ENCODE measurements at regions of chr14 and their contacts with region 1.

Region 1: DNA sequence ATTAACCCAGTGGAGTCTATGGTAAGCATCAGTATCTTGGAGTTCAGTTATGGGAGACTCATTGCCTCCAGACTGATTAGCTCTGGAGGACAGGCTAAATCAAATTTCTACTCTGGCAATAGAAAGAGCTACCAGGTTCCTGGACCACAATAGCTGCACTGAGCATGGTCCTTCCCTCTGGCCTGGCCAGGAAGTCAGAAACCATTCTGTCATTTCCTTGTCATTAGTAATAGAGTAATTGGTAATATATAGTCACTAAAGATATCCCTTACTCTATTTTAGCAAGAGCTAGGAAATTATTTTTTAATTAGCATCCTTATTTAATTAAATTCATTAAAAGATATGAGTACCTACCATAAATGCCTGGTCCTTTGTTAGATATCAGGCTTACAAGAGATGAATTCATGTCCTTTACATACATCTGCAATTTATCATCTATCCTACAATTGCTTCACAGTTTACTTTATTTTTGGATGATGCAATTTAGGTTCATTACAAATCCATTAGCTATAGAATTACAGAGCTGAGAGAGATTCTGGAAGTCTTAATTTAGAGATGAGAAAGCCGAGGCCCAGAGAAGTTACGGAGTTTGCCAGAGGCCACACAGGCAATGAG is 23.7 kb upstream of the TDRD9 start:
- DNase-seq: no peak
- H3K4me3 ChIP-seq: no peak overlapping the region
- H3K27ac ChIP-seq: no peak overlapping the region
- H3K4me1 ChIP-seq: peaks cover under 1% of the 10 kb centered on the region
- H3K27me3 ChIP-seq: no peaks in the 10 kb centered on the region
- CTCF ChIP-seq: no peak

Region 2: GRCh38 chr14:103854747-103855062 is 49.9 kb before region 1 on chr14:
- CTCF ChIA-PET with region 1: interaction called, 25 read pairs
- dilution Hi-C with region 1: loop called (anchors 5 kb)
- in situ Hi-C with region 1: no loop called
- intact Hi-C with region 1: no loop called
- DNase-seq: no peak
- H3K4me3 ChIP-seq: no peak overlapping the region
- H3K27ac ChIP-seq: no peak overlapping the region
- H3K4me1 ChIP-seq: peaks cover 12% of the 10 kb centered on the region
- H3K27me3 ChIP-seq: no peaks in the 10 kb centered on the region
- CTCF ChIP-seq: no peak

Measured in mammary epithelial cell (primary cell).